GM12878 (cell line): ENCODE measurements at regions of chr9 and their contacts with region 1.

Region 1: GRCh38 chr9:98838155-98838867 is 30.8 kb downstream of the GALNT12 start:
- DNase-seq: no peak
- ATAC-seq: no peak
- H3K4me3 ChIP-seq: no peak overlapping the region
- H3K27ac ChIP-seq: no peak overlapping the region
- H3K4me1 ChIP-seq: no peaks in the 10 kb centered on the region
- H3K27me3 ChIP-seq: no peaks in the 10 kb centered on the region; a peak in 1 of 4 replicates
- CTCF ChIP-seq: no peak
- EP300 ChIP-seq: no peak
- POLR2A ChIP-seq: no peak
- RAD21 ChIP-seq: no peak

Region 2: GRCh38 chr9:98429613-98430012 is 408.7 kb before region 1 on chr9:
- CTCF ChIA-PET with region 1: no interaction called
- POLR2A ChIA-PET with region 1: no interaction called
- RAD21 ChIA-PET with region 1: no interaction called
- SMC1A ChIA-PET with region 1: no interaction called
- in situ Hi-C with region 1: no loop called
- intact Hi-C with region 1: no loop called
- DNase-seq: no peak
- ATAC-seq: no peak
- H3K4me3 ChIP-seq: no peak overlapping the region
- H3K27ac ChIP-seq: no peak overlapping the region
- H3K4me1 ChIP-seq: no peaks in the 10 kb centered on the region
- H3K27me3 ChIP-seq: no peaks in the 10 kb centered on the region; a peak in 2 of 4 replicates
- CTCF ChIP-seq: no peak
- EP300 ChIP-seq: no peak
- POLR2A ChIP-seq: no peak
- RAD21 ChIP-seq: no peak

Region 3: GRCh38 chr9:98887918-98888510 is 49.7 kb after region 1 on chr9:
- CTCF ChIA-PET with region 1: no interaction called
- POLR2A ChIA-PET with region 1: no interaction called
- RAD21 ChIA-PET with region 1: no interaction called
- SMC1A ChIA-PET with region 1: no interaction called
- in situ Hi-C with region 1: no loop called
- intact Hi-C with region 1: no loop called
- DNase-seq: no peak
- ATAC-seq: no peak
- H3K4me3 ChIP-seq: no peak overlapping the region
- H3K27ac ChIP-seq: no peak overlapping the region
- H3K4me1 ChIP-seq: no peaks in the 10 kb centered on the region
- H3K27me3 ChIP-seq: no peaks in the 10 kb centered on the region; a peak in 4 of 4 replicates
- CTCF ChIP-seq: no peak
- EP300 ChIP-seq: no peak
- POLR2A ChIP-seq: no peak
- RAD21 ChIP-seq: no peak

Region 4: DNA sequence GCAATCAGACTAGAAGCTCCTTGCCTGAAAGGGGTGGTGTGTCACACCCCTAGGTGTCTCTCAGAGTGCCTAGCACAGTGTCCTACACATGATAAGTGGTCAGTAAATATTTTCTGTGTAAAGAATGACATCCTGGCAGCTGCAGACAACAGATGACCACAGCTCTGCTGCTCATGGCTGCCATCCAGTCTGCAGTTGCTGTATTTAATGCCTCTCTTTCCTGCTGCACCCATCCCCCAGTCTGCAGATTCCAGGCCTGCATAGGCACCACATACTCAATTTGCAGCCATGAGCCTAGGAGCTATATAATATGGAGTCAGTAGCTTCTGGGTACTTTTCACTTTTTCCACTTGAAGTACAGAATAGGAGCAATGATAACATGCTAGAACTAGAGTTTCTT is 888.4 kb after region 1 on chr9:
- CTCF ChIA-PET with region 1: no interaction called
- POLR2A ChIA-PET with region 1: no interaction called
- RAD21 ChIA-PET with region 1: no interaction called
- SMC1A ChIA-PET with region 1: no interaction called
- in situ Hi-C with region 1: no loop called
- intact Hi-C with region 1: loop called (anchors 5 kb)
- DNase-seq: no peak
- ATAC-seq: no peak
- H3K4me3 ChIP-seq: no peak overlapping the region
- H3K27ac ChIP-seq: no peak overlapping the region
- H3K4me1 ChIP-seq: peaks cover 4% of the 10 kb centered on the region; the same call in 1 of the 2 replicates
- H3K27me3 ChIP-seq: no peaks in the 10 kb centered on the region
- CTCF ChIP-seq: no peak
- EP300 ChIP-seq: no peak
- POLR2A ChIP-seq: no peak
- RAD21 ChIP-seq: no peak